Activated CD4-positive, alpha-beta memory T cell treated with anti-CD3 and anti-CD28 coated beads for 36 hours (primary cell): ENCODE measurements at regions of chr5 and their contacts with region 1.

Region 1: DNA sequence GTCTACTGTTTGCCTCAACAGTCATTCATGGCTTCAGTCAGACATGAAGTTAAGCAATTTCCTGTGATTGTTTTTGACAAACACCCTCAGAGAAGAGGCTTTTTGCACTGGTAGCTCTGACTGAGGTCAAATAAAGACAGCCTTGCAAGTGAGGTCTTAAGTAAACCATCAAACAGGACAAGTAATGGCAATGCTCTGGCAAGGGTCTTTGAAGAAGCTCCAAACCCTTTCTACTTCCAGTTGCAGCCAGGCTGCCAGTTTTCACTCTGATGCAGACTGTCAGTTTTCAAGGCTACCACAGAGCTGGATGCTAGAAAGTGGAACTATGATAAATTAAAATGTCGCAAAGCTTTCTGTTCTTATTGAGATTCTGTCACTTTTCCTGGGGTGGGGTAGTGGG is 421.5 kb upstream of the PTGER4 start:
- DNase-seq: peak; percentile 24
- H3K4me3 Mint-ChIP-seq: no peak overlapping the region
- H3K27ac Mint-ChIP-seq: peak overlapping the region; percentile 67
- H3K4me1 Mint-ChIP-seq: peaks cover 11% of the 10 kb centered on the region
- H3K27me3 Mint-ChIP-seq: no peaks in the 10 kb centered on the region

Region 2: GRCh38 chr5:40240111-40240510 is 18.1 kb before region 1 on chr5:
- CTCF ChIA-PET with region 1: no interaction called
- POLR2A ChIA-PET with region 1: no interaction called
- intact Hi-C with region 1: loop called (anchors 2 kb)
- DNase-seq: peak; percentile 84
- H3K4me3 Mint-ChIP-seq: peak overlapping the region; percentile 21
- H3K27ac Mint-ChIP-seq: peak overlapping the region; percentile 92
- H3K4me1 Mint-ChIP-seq: peaks cover 42% of the 10 kb centered on the region
- H3K27me3 Mint-ChIP-seq: no peaks in the 10 kb centered on the region

Region 3: GRCh38 chr5:40270274-40270845 is 12.1 kb after region 1 on chr5:
- CTCF ChIA-PET with region 1: no interaction called
- POLR2A ChIA-PET with region 1: no interaction called
- intact Hi-C with region 1: no loop called
- DNase-seq: peak; percentile 27
- H3K4me3 Mint-ChIP-seq: no peak overlapping the region
- H3K27ac Mint-ChIP-seq: peak overlapping the region; percentile 79
- H3K4me1 Mint-ChIP-seq: peaks cover 37% of the 10 kb centered on the region
- H3K27me3 Mint-ChIP-seq: no peaks in the 10 kb centered on the region